ENCODE measurements at regions of chr16 and their contacts with region 1.

Region 1: DNA sequence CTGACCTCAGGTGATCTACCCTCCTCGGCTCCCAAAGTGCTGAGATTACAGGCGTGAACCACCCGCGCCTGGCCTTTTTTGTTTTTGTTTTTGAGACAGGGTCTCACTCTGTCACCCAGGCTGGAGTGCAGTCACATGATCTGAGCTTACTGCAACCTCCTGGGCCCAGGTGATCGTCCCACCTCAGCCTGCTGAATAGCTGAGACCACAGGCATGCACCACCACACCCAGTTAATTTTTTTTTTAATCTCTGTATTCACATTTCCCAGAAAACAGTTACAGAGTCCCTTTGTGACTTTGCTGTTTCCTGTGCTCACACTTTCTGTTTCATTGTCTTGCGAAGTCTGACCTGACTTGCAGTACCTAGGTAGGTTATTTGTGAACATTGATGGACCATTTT is 2.7 kb downstream of the CLUAP1 start:
- DNase-seq: peak; percentile 37
- H3K4me3 ChIP-seq: no peak overlapping the region
- H3K27ac ChIP-seq: no peak overlapping the region
- H3K4me1 ChIP-seq: peaks cover 0 to 23% (median 17%) of the 10 kb centered on the region in 4 donors
- H3K27me3 ChIP-seq: no peaks in the 10 kb centered on the region
- CTCF ChIP-seq: no peak
- EP300 ChIP-seq: no peak
- POLR2A ChIP-seq: no peak

Region 2: GRCh38 chr16:3158471-3159314 is 344.8 kb before region 1 on chr16:
- intact Hi-C with region 1: no loop called
- DNase-seq: peak; percentile 95
- H3K4me3 ChIP-seq: peak overlapping the region; percentile 52 to 92 (median 78)
- H3K27ac ChIP-seq: peak overlapping the region; percentile 78 to 87 (median 86)
- H3K4me1 ChIP-seq: peaks cover 0 to 27% (median 16%) of the 10 kb centered on the region in 4 donors
- H3K27me3 ChIP-seq: peaks cover 0 to 38% (median 6%) of the 10 kb centered on the region in 3 donors
- CTCF ChIP-seq: no peak
- EP300 ChIP-seq: no peak
- POLR2A ChIP-seq: no peak

Region 3: DNA sequence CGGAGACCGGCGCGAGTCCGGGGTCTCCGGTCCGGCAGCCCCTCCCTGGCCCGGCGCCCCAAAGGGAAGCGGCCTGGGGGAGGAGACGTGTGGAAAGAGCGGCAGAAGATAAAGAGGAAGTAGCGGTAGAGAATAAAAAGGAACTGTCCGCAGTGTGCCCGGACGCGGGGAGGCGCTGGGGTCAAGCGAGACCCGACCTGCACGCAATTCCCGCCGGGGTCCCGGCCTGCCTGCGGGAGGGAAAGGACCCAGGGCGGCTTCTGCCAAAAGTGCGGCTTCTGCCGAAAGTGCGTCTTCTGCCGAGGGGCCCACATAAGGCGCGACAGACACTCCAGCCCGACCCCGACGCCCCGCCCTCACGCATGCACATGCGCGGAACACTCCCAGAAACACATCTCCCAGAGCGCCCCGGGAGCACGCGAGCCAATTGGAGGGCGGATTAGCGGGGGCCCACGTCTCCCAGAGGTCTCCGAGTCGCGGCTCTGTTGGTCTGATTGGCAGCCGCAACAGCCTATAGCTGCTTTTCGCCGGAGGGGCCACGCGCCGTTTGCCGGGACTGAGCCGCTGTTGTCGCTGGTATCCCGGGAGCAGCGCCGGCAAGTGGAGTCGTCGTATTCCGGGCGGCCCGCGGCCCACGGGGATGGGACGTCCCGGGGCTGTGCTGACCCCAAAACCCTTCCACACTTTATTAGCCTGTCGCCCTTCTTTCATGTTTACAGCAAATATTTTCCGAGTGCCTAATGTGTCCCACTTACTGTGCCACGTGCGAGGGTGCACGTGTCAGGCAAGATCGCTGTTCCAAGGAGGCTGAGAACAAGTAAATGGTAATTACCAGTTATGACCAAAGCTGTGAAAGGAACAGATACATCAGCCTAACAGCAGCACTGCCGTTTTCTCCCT is 239.1 kb before region 1 on chr16:
- intact Hi-C with region 1: loop called (anchors 2 kb)
- DNase-seq: peak; percentile 99
- H3K4me3 ChIP-seq: peak overlapping the region; percentile 60 to 98 (median 86)
- H3K27ac ChIP-seq: peak overlapping the region; percentile 90 to 100 (median 97)
- H3K4me1 ChIP-seq: peaks cover 0 to 21% (median 20%) of the 10 kb centered on the region in 4 donors
- H3K27me3 ChIP-seq: no peaks in the 10 kb centered on the region
- CTCF ChIP-seq: peak in 2 of 4 experiments; percentile 13 to 18
- EP300 ChIP-seq: no peak
- POLR2A ChIP-seq: peak; percentile 87 to 91

Measured in sigmoid colon (tissue), 7 donors.